HEK293 (cell line): ENCODE measurements at regions of chr19 and their contacts with region 1.

Region 1: GRCh38 chr19:7348587-7349230 is at the start of gene ARHGEF18:
- H3K4me3 ChIP-seq: no peak within 1 kb of the TSS
- H3K27ac ChIP-seq: no peak within 1 kb of the TSS
- H3K4me1 ChIP-seq: no peaks in the 10 kb centered on the region
- CTCF ChIP-seq: no peak

Region 2: DNA sequence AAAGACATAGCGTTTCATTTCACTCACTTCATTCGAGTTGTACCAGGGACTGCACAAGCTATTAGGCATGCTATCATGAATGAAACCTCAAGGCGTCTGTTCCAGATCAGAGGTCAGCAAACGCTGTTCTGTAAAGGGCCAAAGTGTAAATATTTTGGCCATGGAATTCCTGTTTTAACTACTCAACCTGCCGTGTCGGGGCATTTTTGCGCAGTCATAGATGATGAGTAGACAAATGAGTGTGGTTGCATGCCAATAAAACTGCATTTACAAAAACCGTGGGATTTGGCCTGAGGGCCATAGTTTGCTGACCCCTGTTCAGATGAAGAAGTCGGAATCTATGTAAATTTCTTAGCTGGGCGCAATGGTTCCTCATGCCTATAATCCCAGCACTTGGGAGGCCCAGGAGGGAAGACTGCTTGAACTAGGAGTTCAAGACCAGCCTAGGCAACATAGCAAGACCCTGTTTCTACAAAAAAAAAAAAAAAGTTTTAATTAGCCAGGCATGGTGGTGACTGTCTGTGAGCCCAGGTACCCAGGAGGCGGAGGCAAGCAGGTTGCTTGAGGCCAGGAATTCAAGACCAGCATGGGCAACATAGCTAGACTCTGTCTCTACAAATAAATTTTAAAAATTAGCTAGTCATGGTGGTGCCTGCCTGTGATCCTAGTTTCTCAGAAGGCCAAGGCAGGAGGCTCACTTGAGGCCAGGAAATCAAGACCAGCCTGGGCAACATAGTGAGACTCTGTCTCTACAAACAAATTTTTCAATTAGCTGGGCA is 60.8 kb before region 1 on chr19:
- CTCF ChIA-PET with region 1: no interaction called
- POLR2A ChIA-PET with region 1: no interaction called
- H3K4me3 ChIP-seq: no peak overlapping the region
- H3K27ac ChIP-seq: no peak overlapping the region
- H3K4me1 ChIP-seq: no peaks in the 10 kb centered on the region
- CTCF ChIP-seq: no peak

Region 3: DNA sequence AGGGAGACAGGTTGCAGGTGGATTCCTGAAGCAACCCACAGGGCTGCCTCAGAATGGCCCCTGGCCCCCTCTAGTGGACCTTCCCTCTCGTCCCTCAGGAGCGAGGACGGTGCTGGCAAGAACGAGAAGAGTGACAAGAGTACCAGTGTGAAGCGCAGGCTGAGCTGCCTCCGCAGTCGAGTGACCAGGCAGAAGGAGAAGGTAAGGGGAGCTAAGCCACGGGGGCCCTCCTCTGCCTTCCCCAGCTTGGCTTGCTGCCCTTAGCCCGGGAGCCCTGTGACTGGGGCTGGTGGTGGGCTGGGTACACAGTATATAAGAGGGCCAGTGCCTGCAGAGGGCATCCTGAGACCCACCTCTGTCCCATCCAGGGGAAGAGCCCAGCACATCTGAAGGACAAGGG is 34.0 kb after region 1 on chr19:
- CTCF ChIA-PET with region 1: interaction called, 10 read pairs
- POLR2A ChIA-PET with region 1: no interaction called
- H3K4me3 ChIP-seq: no peak overlapping the region
- H3K27ac ChIP-seq: no peak overlapping the region
- H3K4me1 ChIP-seq: no peaks in the 10 kb centered on the region
- CTCF ChIP-seq: peak; percentile 62; the same call in 1 of the 2 replicates